ENCODE measurements at regions of chrX and their contacts with region 1.

Region 1: GRCh38 chrX:131170148-131170547 is 112.0 kb downstream of the ARHGAP36 start:
- DNase-seq: no peak
- H3K4me3 ChIP-seq: no peak overlapping the region
- H3K27ac ChIP-seq: no peak overlapping the region
- H3K4me1 ChIP-seq: no peaks in the 10 kb centered on the region
- H3K27me3 ChIP-seq: no peaks in the 10 kb centered on the region
- CTCF ChIP-seq: no peak

Region 2: DNA sequence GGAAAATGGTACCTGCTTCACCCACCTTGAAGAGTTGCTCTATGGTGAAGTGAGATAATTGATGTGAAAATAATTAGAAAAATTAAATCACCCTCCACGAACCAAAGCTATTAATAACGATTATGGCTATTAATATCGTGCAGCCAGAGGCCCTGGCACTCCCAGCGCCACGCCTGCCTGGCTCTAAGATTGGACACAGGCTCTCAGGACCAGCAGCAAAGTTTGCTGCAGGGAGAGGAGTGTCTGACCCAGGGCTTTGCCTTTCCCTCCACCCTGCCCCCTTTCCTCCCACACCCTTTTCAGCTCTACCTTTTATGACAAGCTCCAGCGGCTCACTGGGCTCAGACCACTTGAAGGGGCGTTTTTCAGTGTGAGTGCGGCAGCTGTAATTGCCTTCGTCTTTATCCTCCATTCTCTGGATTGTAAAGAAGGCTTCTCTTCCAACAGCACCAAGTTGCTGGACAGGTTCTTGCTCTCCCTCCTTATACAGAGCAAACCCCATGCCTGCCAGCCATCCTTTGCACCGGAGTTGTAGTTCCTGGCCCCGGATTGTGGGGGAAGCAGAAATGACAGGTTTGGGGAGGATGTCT is 107.5 kb after region 1 on chrX:
- intact Hi-C with region 1: no loop called
- DNase-seq: peak in 3 of 5 donors; percentile 20 to 23 (median 21)
- H3K4me3 ChIP-seq: no peak overlapping the region
- H3K27ac ChIP-seq: no peak overlapping the region
- H3K4me1 ChIP-seq: no peaks in the 10 kb centered on the region
- H3K27me3 ChIP-seq: peaks cover 2% of the 10 kb centered on the region
- CTCF ChIP-seq: no peak

Region 3: DNA sequence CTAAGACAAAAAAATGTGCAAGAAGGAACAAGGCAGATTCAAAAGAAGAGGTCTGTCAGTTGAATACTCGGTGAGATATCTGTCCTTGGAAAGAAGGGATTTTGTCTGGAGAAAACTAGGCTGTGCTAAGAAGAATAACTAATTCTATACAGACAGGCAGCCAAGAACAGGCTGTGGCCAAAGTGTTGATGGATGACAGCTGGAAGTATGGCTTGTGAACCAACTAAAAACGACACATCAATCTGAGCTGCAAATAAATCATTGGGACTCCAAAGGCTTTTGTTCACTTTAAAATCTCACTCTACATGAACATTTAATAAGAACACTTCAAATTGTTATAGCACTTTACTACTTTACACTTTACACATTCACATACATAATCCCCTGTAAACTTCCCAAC is 189.5 kb after region 1 on chrX:
- intact Hi-C with region 1: loop called (anchors 5 kb)
- DNase-seq: peak in 2 of 5 donors; percentile 32 to 66
- H3K4me3 ChIP-seq: no peak overlapping the region
- H3K27ac ChIP-seq: no peak overlapping the region
- H3K4me1 ChIP-seq: no peaks in the 10 kb centered on the region
- H3K27me3 ChIP-seq: peaks cover 5% of the 10 kb centered on the region
- CTCF ChIP-seq: no peak